ENCODE measurements at regions of chr3 and their contacts with region 1.

Region 1: GRCh38 chr3:48656061-48656840 is 6.4 kb downstream of the CELSR3 start:
- DNase-seq: peak; percentile 93
- H3K4me3 Mint-ChIP-seq: peak overlapping the region; percentile 79
- H3K27ac Mint-ChIP-seq: peak overlapping the region; percentile 84
- H3K4me1 Mint-ChIP-seq: peaks cover 5% of the 10 kb centered on the region
- H3K27me3 Mint-ChIP-seq: peaks cover 2% of the 10 kb centered on the region

Region 2: GRCh38 chr3:47802734-47803477 is 853.3 kb before region 1 on chr3 and contains the start of gene DHX30:
- CTCF ChIA-PET with region 1: no interaction called
- POLR2A ChIA-PET with region 1: no interaction called
- intact Hi-C with region 1: no loop called
- DNase-seq: peak; percentile 90
- H3K4me3 Mint-ChIP-seq: peak within 1 kb of the TSS; percentile 92
- H3K27ac Mint-ChIP-seq: peak within 1 kb of the TSS; percentile 87
- H3K4me1 Mint-ChIP-seq: peaks cover 21% of the 10 kb centered on the region
- H3K27me3 Mint-ChIP-seq: no peaks in the 10 kb centered on the region
- total RNA-seq, gene DHX30: 76.7 to 77.5 TPM

Region 3: DNA sequence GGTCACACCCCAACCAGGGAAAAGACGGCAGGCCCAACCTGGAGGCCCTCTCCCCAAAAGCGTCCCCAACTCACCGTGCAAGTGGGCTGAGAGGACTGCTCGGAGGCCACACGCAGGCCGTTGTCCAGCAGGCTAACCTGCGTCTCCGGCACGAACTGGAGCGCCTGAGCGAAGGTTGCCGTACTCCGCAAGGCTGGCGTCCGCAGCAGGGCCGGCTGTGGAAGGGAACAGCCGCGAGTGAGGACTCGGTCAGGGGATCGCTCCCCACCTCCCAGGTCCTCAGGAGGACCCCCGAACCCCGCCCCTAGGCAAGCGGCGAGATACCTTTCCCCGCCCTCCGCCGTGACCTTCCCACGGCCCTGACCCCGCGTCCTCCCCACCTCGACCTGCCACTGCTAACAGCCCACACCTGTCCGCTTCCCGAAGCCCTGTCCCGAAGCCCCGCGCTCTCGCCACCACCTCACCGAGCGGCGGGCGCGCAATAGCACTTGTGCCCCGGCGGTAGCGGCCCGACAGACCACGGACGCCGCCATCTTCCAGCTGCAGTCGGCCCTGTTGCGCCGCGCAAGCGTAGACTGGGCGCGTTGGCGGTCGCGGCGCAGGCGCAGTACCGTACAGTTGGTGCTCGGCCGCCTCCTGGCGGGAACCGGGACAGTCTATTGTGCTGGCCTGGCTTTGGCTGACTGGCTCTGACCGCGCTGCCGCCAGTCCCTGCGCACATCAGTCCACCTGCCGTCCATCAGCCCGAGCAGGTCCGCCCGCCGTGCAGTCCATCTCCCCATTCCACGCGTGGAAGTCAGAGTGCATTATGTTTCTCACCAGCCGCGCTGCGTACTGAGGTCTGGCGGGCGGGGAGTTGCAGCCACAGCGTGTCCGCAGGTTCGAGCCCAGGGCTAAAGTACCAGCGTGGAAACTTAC is 46.9 kb before region 1 on chr3 and contains the start of gene UQCRC1:
- CTCF ChIA-PET with region 1: interaction called, 3 read pairs
- POLR2A ChIA-PET with region 1: no interaction called
- intact Hi-C with region 1: loop called (anchors 1 kb)
- DNase-seq: peak; percentile 95
- H3K4me3 Mint-ChIP-seq: peak within 1 kb of the TSS; percentile 99
- H3K27ac Mint-ChIP-seq: peak within 1 kb of the TSS; percentile 90
- H3K4me1 Mint-ChIP-seq: peaks cover 27% of the 10 kb centered on the region
- H3K27me3 Mint-ChIP-seq: no peaks in the 10 kb centered on the region
- total RNA-seq, gene UQCRC1: 251 to 259 TPM

Region 4: GRCh38 chr3:49057268-49057667 is 401.0 kb after region 1 on chr3:
- CTCF ChIA-PET with region 1: no interaction called
- POLR2A ChIA-PET with region 1: no interaction called
- intact Hi-C with region 1: no loop called
- DNase-seq: no peak
- H3K4me3 Mint-ChIP-seq: no peak overlapping the region
- H3K27ac Mint-ChIP-seq: no peak overlapping the region
- H3K4me1 Mint-ChIP-seq: peaks cover 2% of the 10 kb centered on the region
- H3K27me3 Mint-ChIP-seq: no peaks in the 10 kb centered on the region

Measured in activated CD4-positive, alpha-beta memory T cell treated with anti-CD3 and anti-CD28 coated beads for 36 hours (primary cell).